Mammary epithelial cell (primary cell): ENCODE measurements at regions of chr10 and their contacts with region 1.

Region 1: GRCh38 chr10:92164036-92164696 is 126.7 kb downstream of the CPEB3 start:
- DNase-seq: no peak
- H3K4me3 ChIP-seq: no peak overlapping the region
- H3K27ac ChIP-seq: no peak overlapping the region
- H3K4me1 ChIP-seq: no peaks in the 10 kb centered on the region
- H3K27me3 ChIP-seq: no peaks in the 10 kb centered on the region
- CTCF ChIP-seq: no peak

Region 2: DNA sequence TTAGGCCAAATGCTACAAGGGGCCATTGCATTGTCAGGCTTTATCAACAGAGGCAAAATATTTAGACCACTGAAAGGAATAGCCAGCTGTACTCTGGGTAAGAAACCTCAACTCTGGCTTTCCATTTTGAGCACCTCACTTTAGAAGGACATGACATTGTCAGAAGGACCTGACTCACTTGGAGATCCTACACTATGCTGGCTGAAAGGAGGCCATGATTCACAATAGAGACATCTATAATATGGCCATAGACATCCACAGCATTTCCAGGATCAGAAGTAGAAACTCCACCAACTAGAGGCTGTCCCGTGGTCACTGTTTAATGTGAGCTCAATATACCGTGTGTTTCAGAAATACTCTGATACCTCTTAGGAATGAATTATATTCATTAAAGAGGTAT is 99.7 kb before region 1 on chr10:
- CTCF ChIA-PET with region 1: no interaction called
- dilution Hi-C with region 1: no loop called
- in situ Hi-C with region 1: no loop called
- intact Hi-C with region 1: no loop called
- DNase-seq: no peak
- H3K4me3 ChIP-seq: no peak overlapping the region
- H3K27ac ChIP-seq: no peak overlapping the region
- H3K4me1 ChIP-seq: no peaks in the 10 kb centered on the region
- H3K27me3 ChIP-seq: no peaks in the 10 kb centered on the region
- CTCF ChIP-seq: no peak

Region 3: GRCh38 chr10:92124616-92125143 is 39.5 kb before region 1 on chr10:
- CTCF ChIA-PET with region 1: interaction called, 4 read pairs
- dilution Hi-C with region 1: loop called (anchors 5 kb)
- in situ Hi-C with region 1: no loop called
- intact Hi-C with region 1: no loop called
- DNase-seq: peak; percentile 80
- H3K4me3 ChIP-seq: no peak overlapping the region
- H3K27ac ChIP-seq: no peak overlapping the region
- H3K4me1 ChIP-seq: peaks cover 39% of the 10 kb centered on the region
- H3K27me3 ChIP-seq: no peaks in the 10 kb centered on the region
- CTCF ChIP-seq: no peak

Region 4: DNA sequence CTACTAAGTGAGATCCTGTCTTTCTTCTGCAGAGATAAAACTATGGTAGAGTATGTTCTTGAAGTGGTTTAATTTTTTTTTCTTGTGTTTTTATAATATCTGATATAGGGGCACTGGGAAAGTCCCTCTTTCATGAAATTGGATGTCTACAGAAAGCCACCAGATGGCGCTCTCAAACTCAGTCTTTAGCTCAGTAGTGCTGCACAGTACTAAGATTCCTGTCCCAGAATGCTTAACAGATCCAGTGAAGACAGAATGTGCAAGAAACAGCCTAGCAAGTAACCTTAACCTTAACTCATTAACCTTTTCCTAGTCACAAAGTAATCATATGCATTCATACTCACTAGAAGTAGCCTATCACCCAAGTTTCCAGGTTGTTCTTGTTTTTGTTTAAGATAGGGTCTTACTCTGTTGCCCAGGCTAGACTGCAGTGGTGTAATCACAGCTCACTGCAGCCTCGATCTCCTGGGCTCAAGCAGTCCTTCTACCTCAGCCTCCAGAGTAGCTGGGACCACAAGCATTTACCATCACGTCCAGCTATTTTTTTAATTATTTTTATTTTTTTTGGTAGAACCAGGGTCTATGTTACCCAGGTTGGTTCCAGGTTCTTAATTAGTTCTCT is 353.0 kb after region 1 on chr10:
- CTCF ChIA-PET with region 1: no interaction called
- dilution Hi-C with region 1: no loop called
- in situ Hi-C with region 1: no loop called
- intact Hi-C with region 1: no loop called
- DNase-seq: peak; percentile 45
- H3K4me3 ChIP-seq: no peak overlapping the region
- H3K27ac ChIP-seq: no peak overlapping the region
- H3K4me1 ChIP-seq: no peaks in the 10 kb centered on the region
- H3K27me3 ChIP-seq: no peaks in the 10 kb centered on the region
- CTCF ChIP-seq: peak; percentile 70 to 73